Sigmoid colon (tissue), 7 donors: ENCODE measurements at regions of chr20 and their contacts with region 1.

Region 1: GRCh38 chr20:13995081-13995694 is at the start of gene MACROD2:
- DNase-seq: peak; percentile 95
- H3K4me3 ChIP-seq: peak within 1 kb of the TSS; percentile 70 to 90 (median 81)
- H3K27ac ChIP-seq: peak within 1 kb of the TSS; percentile 63 to 80 (median 78)
- H3K4me1 ChIP-seq: peaks cover 0 to 12% (median 5%) of the 10 kb centered on the region in 4 donors
- H3K27me3 ChIP-seq: no peaks in the 10 kb centered on the region
- CTCF ChIP-seq: no peak
- EP300 ChIP-seq: no peak
- POLR2A ChIP-seq: peak in 1 of 2 donors; percentile 29
- total RNA-seq, gene MACROD2: 5.8 to 22.4 (median 8.9) TPM

Region 2: DNA sequence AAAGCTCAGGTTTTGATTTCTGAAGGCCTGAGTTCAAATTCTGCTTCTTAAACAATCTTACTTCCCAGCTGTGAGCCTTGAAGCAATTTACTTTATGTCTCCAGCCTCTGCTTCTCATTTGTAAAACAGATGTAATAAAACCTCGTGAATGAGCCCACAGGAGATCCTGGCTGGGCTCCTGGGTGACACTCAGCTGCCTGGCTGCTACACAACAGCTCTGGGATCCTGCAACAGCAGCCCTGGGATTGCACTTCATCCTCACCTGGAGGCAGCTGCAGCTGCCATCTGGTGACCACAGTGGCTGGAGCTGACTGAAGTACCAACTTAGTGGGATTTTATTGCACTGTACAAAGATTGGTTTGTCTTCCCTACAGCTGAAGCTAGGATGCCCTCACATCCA is 111.8 kb before region 1 on chr20:
- intact Hi-C with region 1: loop called (anchors 2 kb)
- DNase-seq: peak; percentile 84
- H3K4me3 ChIP-seq: no peak overlapping the region
- H3K27ac ChIP-seq: peak overlapping the region in 3 of 4 donors; percentile 1 to 50 (median 17)
- H3K4me1 ChIP-seq: peaks cover 0 to 25% (median 21%) of the 10 kb centered on the region in 4 donors
- H3K27me3 ChIP-seq: no peaks in the 10 kb centered on the region
- CTCF ChIP-seq: peak in 1 of 4 experiments; percentile 30
- EP300 ChIP-seq: no peak
- POLR2A ChIP-seq: no peak

Region 3: DNA sequence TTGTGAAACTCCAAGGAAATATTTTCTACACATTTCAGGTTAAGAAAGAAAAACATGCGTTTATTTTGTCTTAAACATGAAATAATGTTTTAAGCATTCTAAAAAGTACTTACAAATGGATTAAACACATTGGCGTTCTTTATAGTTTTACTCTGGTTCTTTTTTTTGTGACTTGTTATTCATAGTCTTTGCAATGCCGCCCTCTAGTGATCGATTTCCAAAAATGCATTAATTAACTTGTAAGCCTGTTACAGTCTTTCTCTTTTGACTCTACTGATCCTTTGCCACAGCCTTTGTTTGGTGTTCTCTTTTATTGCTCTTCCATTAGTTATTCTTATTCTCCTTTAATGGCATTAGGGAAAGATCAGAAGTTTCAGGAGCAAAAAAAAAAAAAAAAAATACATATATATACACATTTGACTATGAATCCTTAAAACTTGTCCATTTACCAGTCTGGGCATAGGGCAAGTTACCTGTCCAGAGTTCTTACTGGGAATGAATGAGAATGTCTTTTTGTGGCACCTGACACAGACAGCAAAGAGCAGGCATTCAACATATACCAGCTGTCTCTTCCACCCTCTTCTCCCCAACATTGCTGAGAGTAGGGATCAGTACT is 60.0 kb after region 1 on chr20:
- intact Hi-C with region 1: loop called (anchors 5 kb)
- DNase-seq: no peak
- H3K4me3 ChIP-seq: no peak overlapping the region
- H3K27ac ChIP-seq: no peak overlapping the region
- H3K4me1 ChIP-seq: peaks cover 0 to 11% (median 5%) of the 10 kb centered on the region in 4 donors
- H3K27me3 ChIP-seq: no peaks in the 10 kb centered on the region
- CTCF ChIP-seq: peak; percentile 22 to 51 (median 45)
- EP300 ChIP-seq: no peak
- POLR2A ChIP-seq: no peak